Vagina (tissue), 2 donors: ENCODE measurements at regions of chr22 and their contacts with region 1.

Region 1: GRCh38 chr22:20495861-20496681 is 476 bp upstream of the KLHL22 start:
- DNase-seq: no peak
- H3K4me3 ChIP-seq: peak overlapping the region; percentile 67 to 73
- H3K27ac ChIP-seq: peak overlapping the region; percentile 92
- H3K4me1 ChIP-seq: peaks cover 35% of the 10 kb centered on the region
- H3K27me3 ChIP-seq: no peaks in the 10 kb centered on the region
- CTCF ChIP-seq: peak; percentile 54 to 90 (median 86)
- POLR2A ChIP-seq: peak in 1 of 2 donors; percentile 71

Region 2: DNA sequence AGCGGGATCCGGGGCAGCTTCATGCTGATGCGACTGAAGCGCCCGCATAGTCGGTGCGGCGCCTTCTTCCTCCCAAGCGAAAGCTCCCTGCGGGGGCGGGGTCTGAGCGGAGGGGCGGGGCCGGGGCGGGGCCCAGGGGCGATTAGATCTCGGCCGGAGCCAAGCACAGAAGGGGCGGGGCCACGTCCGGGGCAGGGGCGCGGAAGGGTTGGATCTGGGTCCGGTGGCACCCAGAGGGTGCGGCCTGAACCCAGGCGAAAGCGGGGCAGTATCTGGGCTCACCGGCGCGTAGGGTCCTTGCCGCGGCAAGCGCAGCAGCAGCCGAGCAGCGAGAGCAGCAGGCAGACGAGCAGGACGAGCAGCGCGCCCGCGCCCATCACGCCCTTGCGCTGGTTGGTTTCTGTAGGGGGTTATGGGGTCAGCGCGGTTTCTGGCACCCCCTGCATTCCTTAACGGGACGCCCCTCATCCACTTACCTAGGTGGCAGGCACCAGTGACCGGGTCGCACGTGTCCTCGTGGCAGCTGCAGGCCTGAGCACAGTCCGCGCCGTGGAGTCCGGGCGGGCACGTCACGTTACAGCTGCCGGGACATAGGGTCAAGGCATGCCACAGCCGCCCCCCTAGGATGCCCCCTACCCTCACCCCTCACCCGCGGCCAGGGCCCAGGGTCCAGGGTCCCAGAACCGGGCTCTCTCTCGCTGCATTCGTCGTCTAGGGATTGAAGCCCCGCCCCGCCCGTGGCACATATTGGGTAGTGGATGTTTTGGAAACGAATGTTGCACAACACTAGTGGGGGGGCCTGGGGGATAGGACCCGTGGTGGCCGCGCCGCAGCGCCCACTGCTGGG is 66.6 kb before region 1 on chr22:
- intact Hi-C with region 1: loop called (anchors 10 kb)
- DNase-seq: peak in 1 of 2 donors; percentile 83
- H3K4me3 ChIP-seq: peak overlapping the region in 1 of 2 donors; percentile 33
- H3K27ac ChIP-seq: no peak overlapping the region
- H3K4me1 ChIP-seq: peaks cover 48% of the 10 kb centered on the region
- H3K27me3 ChIP-seq: no peaks in the 10 kb centered on the region
- CTCF ChIP-seq: no peak
- POLR2A ChIP-seq: no peak